ENCODE measurements at regions of chr9 and their contacts with region 1.

Region 1: GRCh38 chr9:87662808-87663528 is 63.0 kb upstream of the CTSL start:
- DNase-seq: peak; percentile 89
- H3K27ac ChIP-seq: peak overlapping the region; percentile 11; the same call in 1 of the 2 replicates
- CTCF ChIP-seq: peak; percentile 75

Region 2: GRCh38 chr9:87336914-87337333 is 326.0 kb before region 1 on chr9:
- CTCF ChIA-PET with region 1: interaction called, 24 read pairs
- POLR2A ChIA-PET with region 1: no interaction called
- DNase-seq: peak; percentile 61
- H3K27ac ChIP-seq: no peak overlapping the region
- CTCF ChIP-seq: peak; percentile 74

Region 3: GRCh38 chr9:87635656-87636501 is 27.1 kb before region 1 on chr9:
- CTCF ChIA-PET with region 1: no interaction called
- POLR2A ChIA-PET with region 1: no interaction called
- DNase-seq: no peak
- H3K27ac ChIP-seq: no peak overlapping the region
- CTCF ChIP-seq: no peak

Measured in RWPE1 (cell line).